Heart left ventricle (tissue), 16 donors: ENCODE measurements at regions of chr2 and their contacts with region 1.

Region 1: GRCh38 chr2:12716282-12717190 is at the start of gene TRIB2:
- DNase-seq: peak; percentile 92 to 95 (median 94)
- ATAC-seq: peak; percentile 74 to 90 (median 81)
- H3K4me3 ChIP-seq: peak within 1 kb of the TSS; percentile 68 to 97 (median 87)
- H3K27ac ChIP-seq: peak within 1 kb of the TSS; percentile 90 to 100 (median 96)
- H3K4me1 ChIP-seq: peaks cover 0 to 39% (median 24%) of the 10 kb centered on the region in 12 donors
- H3K27me3 ChIP-seq: no peaks in the 10 kb centered on the region
- CTCF ChIP-seq: peak in 6 of 12 donors; percentile 10 to 39 (median 18)
- POLR2A ChIP-seq: peak; percentile 60 to 88
- total RNA-seq, gene TRIB2: 34.3 to 140 (median 41.4) TPM

Region 2: DNA sequence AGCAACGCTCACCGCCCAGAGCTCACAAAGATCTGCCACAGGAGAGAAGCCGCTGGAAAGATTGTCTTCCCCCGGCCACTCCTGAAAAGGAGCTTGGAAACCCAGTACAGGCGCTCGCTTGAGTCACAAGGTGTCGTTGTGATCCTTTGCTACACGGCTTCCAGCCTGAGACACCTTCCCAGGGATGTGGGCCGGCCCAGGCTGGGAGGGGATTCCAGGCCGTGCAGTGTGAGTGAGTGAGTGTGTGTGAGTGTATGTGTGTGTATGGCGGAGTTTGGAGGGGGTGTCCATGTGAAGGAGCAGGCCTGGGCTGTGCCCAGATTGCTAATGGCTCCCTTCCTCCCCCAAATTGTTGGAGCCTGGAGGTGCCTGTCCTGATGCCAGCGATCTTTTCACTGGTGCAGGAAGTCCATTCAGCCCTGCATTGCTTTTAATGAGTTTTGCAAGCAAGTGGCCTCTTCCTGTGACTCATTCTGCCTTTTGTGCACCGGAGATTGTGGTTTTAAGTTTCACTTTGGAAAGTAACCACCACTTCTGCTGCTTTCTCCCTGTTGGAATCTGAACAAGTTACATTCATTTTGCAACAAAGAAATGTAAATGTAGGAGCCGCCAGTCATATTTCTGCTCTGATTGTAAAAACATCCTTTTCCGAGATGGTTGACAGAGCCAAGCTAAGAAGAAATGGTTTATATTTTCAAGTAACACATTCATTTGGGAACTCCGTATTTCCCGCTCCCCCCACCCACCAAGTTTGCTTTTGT is 886.4 kb before region 1 on chr2:
- intact Hi-C with region 1: loop called (anchors 1 to 10 kb)
- DNase-seq: peak; percentile 69 to 79 (median 75)
- ATAC-seq: peak; percentile 85 to 92 (median 88)
- H3K4me3 ChIP-seq: peak overlapping the region in 10 of 12 donors; percentile 9 to 42 (median 24)
- H3K27ac ChIP-seq: peak overlapping the region in 11 of 12 donors; percentile 55 to 82 (median 71)
- H3K4me1 ChIP-seq: peaks cover 4 to 37% (median 21%) of the 10 kb centered on the region in 12 donors
- H3K27me3 ChIP-seq: no peaks in the 10 kb centered on the region
- CTCF ChIP-seq: peak in 9 of 12 donors; percentile 21 to 55 (median 39)
- POLR2A ChIP-seq: no peak

Region 3: DNA sequence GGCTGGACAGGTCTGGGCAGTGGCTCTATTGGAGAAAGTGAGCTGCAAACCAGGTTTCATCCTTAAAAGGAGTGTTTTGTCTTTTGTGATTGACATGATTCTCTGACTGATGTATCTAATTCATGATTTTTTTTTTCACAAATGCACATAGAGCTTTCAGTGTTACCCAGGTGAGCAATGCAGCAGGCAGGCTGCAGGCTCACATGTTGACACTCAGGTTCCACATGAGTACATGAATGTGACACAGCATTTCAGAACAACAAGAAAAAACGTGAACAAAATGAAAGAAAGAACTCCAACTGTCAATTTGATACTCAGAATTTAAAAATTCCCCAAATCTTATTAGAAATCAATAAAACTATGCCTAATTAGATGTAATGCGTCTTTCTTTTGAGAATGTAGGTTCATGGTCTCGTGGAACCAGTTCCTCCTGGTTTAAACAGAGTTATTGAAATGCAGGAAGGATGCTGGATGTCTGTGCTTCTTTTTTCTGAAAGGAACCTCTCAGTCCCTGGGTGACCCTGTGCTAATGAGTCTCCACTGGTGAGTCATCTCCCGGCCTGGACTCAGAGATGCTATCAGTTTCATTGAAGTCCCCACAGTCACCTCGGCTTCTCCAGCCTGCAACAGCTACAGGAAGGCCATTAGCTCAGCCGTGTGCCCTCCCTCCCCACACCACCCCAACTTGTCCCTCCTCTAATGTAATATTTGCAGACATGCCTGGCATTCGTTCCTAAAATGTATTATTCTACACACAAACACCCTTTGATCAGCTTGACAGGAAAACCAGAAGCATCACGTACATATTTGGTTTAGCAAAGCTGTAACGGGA is 539.7 kb before region 1 on chr2:
- intact Hi-C with region 1: loop called in 4 of 10 experiments (anchors 2 to 10 kb)
- DNase-seq: peak; percentile 51 to 75 (median 72)
- ATAC-seq: peak; percentile 60 to 96 (median 90)
- H3K4me3 ChIP-seq: no peak overlapping the region
- H3K27ac ChIP-seq: peak overlapping the region in 7 of 12 donors; percentile 2 to 65 (median 6)
- H3K4me1 ChIP-seq: peaks cover 8 to 33% (median 22%) of the 10 kb centered on the region in 12 donors
- H3K27me3 ChIP-seq: no peaks in the 10 kb centered on the region
- CTCF ChIP-seq: no peak
- POLR2A ChIP-seq: no peak

Region 4: DNA sequence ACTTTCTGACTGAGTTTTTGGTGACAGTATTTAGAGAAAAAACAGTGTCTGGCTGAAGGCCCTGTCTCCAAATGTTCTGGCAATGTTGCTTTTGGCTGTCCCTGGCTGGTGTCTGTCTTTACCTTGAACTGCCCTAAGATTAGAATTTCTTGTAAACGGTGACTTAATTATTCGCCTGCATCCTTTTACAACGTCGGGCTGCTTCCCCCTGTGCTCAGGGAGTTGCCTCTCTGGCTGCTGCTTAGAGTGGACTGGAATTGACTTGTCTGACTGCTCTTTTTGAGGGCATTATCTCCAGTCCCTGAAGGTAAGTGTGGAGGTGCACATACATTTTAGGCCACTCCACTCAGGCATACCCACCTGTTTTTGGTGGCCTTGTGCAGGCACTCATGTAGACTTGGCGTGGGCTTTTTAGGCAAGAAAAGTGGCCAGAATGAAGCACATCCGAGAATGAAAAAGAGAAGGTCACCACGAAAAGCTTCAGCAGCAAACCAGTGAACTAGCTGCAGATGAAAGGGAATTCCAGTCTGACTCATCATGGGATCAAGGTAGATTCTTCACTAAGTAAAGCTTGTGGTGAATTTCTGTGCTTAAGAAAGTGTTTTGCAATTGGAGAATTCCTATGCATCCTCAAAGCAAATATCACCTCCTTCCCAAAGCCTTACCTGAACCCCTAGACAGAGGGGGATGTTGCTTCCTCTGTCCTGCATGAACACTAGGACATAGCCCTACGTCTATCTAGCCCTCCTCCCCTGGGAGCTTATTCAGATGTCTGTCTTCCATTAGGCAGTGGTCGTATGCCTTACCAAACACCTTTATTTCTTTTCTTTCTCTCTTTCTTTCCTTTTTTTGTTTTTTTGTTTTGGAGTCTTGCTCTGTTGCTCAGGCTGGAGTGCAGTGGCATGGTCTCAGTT is 230.1 kb before region 1 on chr2:
- intact Hi-C with region 1: loop called in 1 of 10 experiments (anchors 10 kb)
- DNase-seq: no peak
- ATAC-seq: peak; percentile 26 to 63 (median 54)
- H3K4me3 ChIP-seq: no peak overlapping the region
- H3K27ac ChIP-seq: peak overlapping the region in 2 of 12 donors; percentile 6 to 10
- H3K4me1 ChIP-seq: peaks cover 0 to 43% (median 25%) of the 10 kb centered on the region in 12 donors
- H3K27me3 ChIP-seq: no peaks in the 10 kb centered on the region
- CTCF ChIP-seq: no peak
- POLR2A ChIP-seq: no peak

Region 5: GRCh38 chr2:12555012-12555645 is 161.4 kb before region 1 on chr2:
- intact Hi-C with region 1: loop called in 1 of 10 experiments (anchors 10 kb)
- DNase-seq: no peak
- ATAC-seq: peak in 2 of 4 donors; percentile 67 to 69
- H3K4me3 ChIP-seq: no peak overlapping the region
- H3K27ac ChIP-seq: peak overlapping the region in 7 of 12 donors; percentile 14 to 58 (median 28)
- H3K4me1 ChIP-seq: peaks cover 0 to 23% (median 10%) of the 10 kb centered on the region in 12 donors
- H3K27me3 ChIP-seq: no peaks in the 10 kb centered on the region
- CTCF ChIP-seq: peak in 6 of 12 donors; percentile 8 to 41 (median 19)
- POLR2A ChIP-seq: no peak

Region 6: DNA sequence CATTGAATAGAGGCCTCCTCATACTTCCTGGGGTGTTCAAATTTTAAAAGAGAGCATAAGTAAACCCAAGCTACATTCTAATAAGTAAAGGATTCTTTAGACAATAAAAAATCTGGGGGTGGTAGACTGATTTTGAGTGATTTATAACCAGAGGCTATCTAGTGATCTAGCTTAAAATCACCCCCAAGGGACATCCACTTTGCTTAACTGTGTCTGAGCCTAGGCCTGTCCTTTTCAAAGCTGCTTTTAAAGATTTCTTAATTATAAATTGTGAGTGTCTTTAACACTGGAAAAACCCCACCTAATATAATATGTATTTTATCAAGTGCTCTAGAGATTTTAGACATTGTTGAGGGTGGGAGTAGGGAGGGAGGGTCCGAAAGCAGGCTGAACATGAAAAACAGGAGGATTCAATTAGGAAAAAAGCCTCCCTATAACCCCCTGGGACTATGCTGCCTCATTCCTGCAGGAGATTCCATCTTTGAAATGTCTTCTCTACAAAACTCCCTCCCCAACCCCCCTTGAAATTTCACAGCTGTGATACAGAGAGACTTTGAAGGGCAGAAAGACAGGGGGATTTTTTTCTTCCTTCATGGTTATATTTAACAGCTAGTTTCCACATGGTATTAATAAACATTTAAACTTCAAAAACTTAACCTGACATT is 57.7 kb after region 1 on chr2:
- intact Hi-C with region 1: no loop called
- DNase-seq: peak in 1 of 5 donors; percentile 41
- ATAC-seq: peak in 1 of 4 donors; percentile 26
- H3K4me3 ChIP-seq: no peak overlapping the region
- H3K27ac ChIP-seq: no peak overlapping the region
- H3K4me1 ChIP-seq: peaks cover 0 to 12% (median 0%) of the 10 kb centered on the region in 12 donors
- H3K27me3 ChIP-seq: peaks cover 0 to 3% (median 0%) of the 10 kb centered on the region in 9 donors
- CTCF ChIP-seq: no peak
- POLR2A ChIP-seq: no peak

Region 7: GRCh38 chr2:12923907-12924610 is 207.5 kb after region 1 on chr2:
- intact Hi-C with region 1: loop called in 2 of 10 experiments (anchors 2 kb)
- DNase-seq: no peak
- ATAC-seq: no peak
- H3K4me3 ChIP-seq: no peak overlapping the region
- H3K27ac ChIP-seq: no peak overlapping the region
- H3K4me1 ChIP-seq: peaks cover 0 to 25% (median 13%) of the 10 kb centered on the region in 12 donors
- H3K27me3 ChIP-seq: no peaks in the 10 kb centered on the region
- CTCF ChIP-seq: no peak
- POLR2A ChIP-seq: no peak

Region 8: DNA sequence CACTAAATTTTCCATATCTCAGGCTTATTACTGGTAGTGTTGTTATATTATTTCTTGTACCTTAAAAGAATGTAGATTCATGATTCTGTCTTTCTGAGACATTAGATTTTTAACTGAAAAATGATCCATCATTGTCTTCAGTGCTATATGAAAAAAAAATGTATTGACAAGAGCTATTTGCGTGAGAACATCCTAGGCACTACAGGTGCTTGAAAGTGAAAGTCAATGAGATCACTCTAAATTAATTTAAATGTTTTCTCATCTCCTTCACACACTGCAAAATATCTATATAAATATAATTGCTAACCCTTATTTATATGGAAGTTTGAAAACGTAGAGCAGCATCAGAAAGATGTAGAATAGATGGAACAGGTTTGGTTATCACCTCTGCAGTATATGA is 684.8 kb after region 1 on chr2:
- intact Hi-C with region 1: no loop called
- DNase-seq: no peak
- ATAC-seq: no peak
- H3K4me3 ChIP-seq: no peak overlapping the region
- H3K27ac ChIP-seq: no peak overlapping the region
- H3K4me1 ChIP-seq: no peaks in the 10 kb centered on the region
- H3K27me3 ChIP-seq: no peaks in the 10 kb centered on the region
- CTCF ChIP-seq: no peak
- POLR2A ChIP-seq: no peak